GM12878 (cell line): ENCODE measurements at regions of chr11 and their contacts with region 1.

Region 1: GRCh38 chr11:112289588-112290492 is 29.2 kb upstream of the PLET1 start:
- DNase-seq: no peak
- ATAC-seq: peak; percentile 100
- H3K4me3 ChIP-seq: peak overlapping the region; percentile 68; the same call in 1 of the 2 replicates
- H3K27ac ChIP-seq: no peak overlapping the region
- H3K4me1 ChIP-seq: peaks cover 4% of the 10 kb centered on the region; the same call in 1 of the 2 replicates
- H3K27me3 ChIP-seq: no peaks in the 10 kb centered on the region
- CTCF ChIP-seq: peak; percentile 72 to 73 (median 73)
- EP300 ChIP-seq: no peak
- POLR2A ChIP-seq: no peak
- RAD21 ChIP-seq: peak; percentile 71

Region 2: GRCh38 chr11:112453601-112454577 is 164.0 kb after region 1 on chr11:
- CTCF ChIA-PET with region 1: interaction called, 5 read pairs
- POLR2A ChIA-PET with region 1: no interaction called
- RAD21 ChIA-PET with region 1: interaction called, 3 read pairs
- SMC1A ChIA-PET with region 1: interaction called, 3 read pairs
- in situ Hi-C with region 1: no loop called
- intact Hi-C with region 1: loop called (anchors 1 kb)
- DNase-seq: no peak
- ATAC-seq: peak; percentile 85
- H3K4me3 ChIP-seq: no peak overlapping the region
- H3K27ac ChIP-seq: no peak overlapping the region
- H3K4me1 ChIP-seq: no peaks in the 10 kb centered on the region
- H3K27me3 ChIP-seq: no peaks in the 10 kb centered on the region
- CTCF ChIP-seq: peak; percentile 34 to 48 (median 43)
- EP300 ChIP-seq: no peak
- POLR2A ChIP-seq: no peak
- RAD21 ChIP-seq: 0 out of 2 replicates have a peak, but pooled peaks have one; percentile 4

Region 3: GRCh38 chr11:112555491-112556364 is 265.9 kb after region 1 on chr11:
- CTCF ChIA-PET with region 1: interaction called, 8 read pairs
- POLR2A ChIA-PET with region 1: no interaction called
- RAD21 ChIA-PET with region 1: no interaction called
- SMC1A ChIA-PET with region 1: no interaction called
- in situ Hi-C with region 1: no loop called
- intact Hi-C with region 1: loop called (anchors 1 kb)
- DNase-seq: no peak
- ATAC-seq: peak; percentile 74
- H3K4me3 ChIP-seq: no peak overlapping the region
- H3K27ac ChIP-seq: no peak overlapping the region
- H3K4me1 ChIP-seq: no peaks in the 10 kb centered on the region
- H3K27me3 ChIP-seq: no peaks in the 10 kb centered on the region; a peak in 1 of 4 replicates
- CTCF ChIP-seq: peak; percentile 50 to 82 (median 76)
- EP300 ChIP-seq: no peak
- POLR2A ChIP-seq: no peak
- RAD21 ChIP-seq: peak; percentile 60

Region 4: DNA sequence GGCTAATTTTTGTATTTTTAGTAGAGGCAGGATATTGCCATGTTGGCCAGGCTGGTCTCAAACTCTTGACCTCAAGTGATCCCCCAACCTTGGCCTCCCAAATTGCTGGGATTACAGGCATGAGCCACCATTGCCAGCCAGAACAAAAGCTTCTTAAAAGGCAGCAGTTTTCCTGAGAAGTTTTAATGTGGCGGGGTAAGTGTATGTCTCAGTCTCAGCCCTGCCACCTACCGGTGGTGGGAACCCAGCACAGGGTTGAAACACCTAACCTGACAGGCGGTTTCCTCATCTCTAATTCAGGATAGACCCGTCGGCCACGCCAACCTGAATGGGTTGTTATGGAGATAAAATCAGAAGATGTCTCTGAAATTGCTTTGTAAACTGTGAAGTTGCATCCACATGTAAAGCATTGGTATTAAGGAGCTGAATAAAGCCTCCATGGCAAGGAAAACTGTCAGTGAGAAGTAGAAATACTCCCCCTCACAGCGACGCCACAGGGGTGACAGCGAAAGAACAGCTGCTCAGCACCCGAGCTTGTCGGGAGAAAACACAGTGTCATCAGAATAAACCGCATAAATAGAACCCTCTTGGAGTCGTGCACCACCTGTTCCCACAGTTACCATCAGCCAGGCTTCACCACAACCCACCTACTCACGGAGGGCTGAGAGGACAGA is 505.4 kb after region 1 on chr11:
- CTCF ChIA-PET with region 1: no interaction called
- POLR2A ChIA-PET with region 1: no interaction called
- RAD21 ChIA-PET with region 1: no interaction called
- SMC1A ChIA-PET with region 1: no interaction called
- in situ Hi-C with region 1: no loop called
- intact Hi-C with region 1: loop called (anchors 2 kb)
- DNase-seq: no peak
- ATAC-seq: peak; percentile 94
- H3K4me3 ChIP-seq: no peak overlapping the region
- H3K27ac ChIP-seq: no peak overlapping the region
- H3K4me1 ChIP-seq: 0 out of 2 replicates have a peak, but pooled peaks cover 3% of the 10 kb centered on the region
- H3K27me3 ChIP-seq: no peaks in the 10 kb centered on the region; a peak in 2 of 4 replicates
- CTCF ChIP-seq: peak; percentile 66 to 77 (median 77)
- EP300 ChIP-seq: no peak
- POLR2A ChIP-seq: no peak
- RAD21 ChIP-seq: peak; percentile 64